Colonic mucosa (tissue), 4 donors: ENCODE measurements at regions of chr3 and their contacts with region 1.

Region 1: GRCh38 chr3:124552239-124552638 is 178.0 kb upstream of the UMPS start:
- DNase-seq: peak; percentile 77
- H3K4me3 ChIP-seq: no peak overlapping the region
- H3K27ac ChIP-seq: no peak overlapping the region
- H3K4me1 ChIP-seq: peaks cover 9% of the 10 kb centered on the region
- H3K27me3 ChIP-seq: no peaks in the 10 kb centered on the region
- CTCF ChIP-seq: no peak

Region 2: DNA sequence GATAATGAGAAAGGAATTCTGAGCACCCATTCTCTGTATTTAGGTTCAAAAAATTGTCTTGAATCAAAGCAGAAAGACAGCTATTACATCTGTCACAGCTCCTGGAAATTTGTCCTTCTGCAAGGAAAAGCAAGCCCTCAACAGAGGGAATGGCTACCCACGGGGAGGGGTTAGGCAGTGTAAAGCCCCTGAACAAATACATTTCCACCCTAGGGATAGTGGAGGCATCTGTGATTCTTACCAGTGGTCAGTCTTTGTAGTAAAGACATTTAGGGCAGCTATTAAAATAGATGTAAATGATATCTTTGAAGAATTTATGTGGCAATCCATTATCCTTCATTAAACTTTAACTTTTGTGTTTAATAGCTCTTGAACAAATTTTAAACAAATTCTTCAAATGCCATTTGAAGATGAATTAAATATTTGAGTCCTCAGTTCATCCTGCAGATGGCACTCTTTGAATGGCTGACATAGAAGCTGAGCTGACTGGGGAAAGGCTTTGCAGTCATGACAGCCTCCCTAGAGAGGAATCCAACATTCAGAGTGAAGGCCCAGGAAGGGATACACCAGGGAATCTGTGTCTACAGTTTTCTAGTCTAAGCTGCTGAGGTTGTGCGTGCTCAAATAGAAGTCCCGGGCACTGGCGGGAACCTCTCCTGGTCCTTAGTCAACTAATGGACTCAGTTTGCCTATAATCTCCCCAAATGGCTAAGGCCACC is 200.7 kb before region 1 on chr3:
- intact Hi-C with region 1: loop called (anchors 2 kb)
- DNase-seq: peak; percentile 34
- H3K4me3 ChIP-seq: no peak overlapping the region
- H3K27ac ChIP-seq: no peak overlapping the region
- H3K4me1 ChIP-seq: no peaks in the 10 kb centered on the region
- H3K27me3 ChIP-seq: no peaks in the 10 kb centered on the region
- CTCF ChIP-seq: peak; percentile 50

Region 3: GRCh38 chr3:124451630-124452317 is 100.5 kb before region 1 on chr3:
- intact Hi-C with region 1: no loop called
- DNase-seq: no peak
- H3K4me3 ChIP-seq: no peak overlapping the region
- H3K27ac ChIP-seq: no peak overlapping the region
- H3K4me1 ChIP-seq: no peaks in the 10 kb centered on the region
- H3K27me3 ChIP-seq: no peaks in the 10 kb centered on the region
- CTCF ChIP-seq: no peak

Region 4: GRCh38 chr3:124492811-124493210 is 59.4 kb before region 1 on chr3:
- intact Hi-C with region 1: loop called (anchors 5 kb)
- DNase-seq: peak; percentile 78
- H3K4me3 ChIP-seq: no peak overlapping the region
- H3K27ac ChIP-seq: no peak overlapping the region
- H3K4me1 ChIP-seq: no peaks in the 10 kb centered on the region
- H3K27me3 ChIP-seq: no peaks in the 10 kb centered on the region
- CTCF ChIP-seq: peak; percentile 47

Region 5: DNA sequence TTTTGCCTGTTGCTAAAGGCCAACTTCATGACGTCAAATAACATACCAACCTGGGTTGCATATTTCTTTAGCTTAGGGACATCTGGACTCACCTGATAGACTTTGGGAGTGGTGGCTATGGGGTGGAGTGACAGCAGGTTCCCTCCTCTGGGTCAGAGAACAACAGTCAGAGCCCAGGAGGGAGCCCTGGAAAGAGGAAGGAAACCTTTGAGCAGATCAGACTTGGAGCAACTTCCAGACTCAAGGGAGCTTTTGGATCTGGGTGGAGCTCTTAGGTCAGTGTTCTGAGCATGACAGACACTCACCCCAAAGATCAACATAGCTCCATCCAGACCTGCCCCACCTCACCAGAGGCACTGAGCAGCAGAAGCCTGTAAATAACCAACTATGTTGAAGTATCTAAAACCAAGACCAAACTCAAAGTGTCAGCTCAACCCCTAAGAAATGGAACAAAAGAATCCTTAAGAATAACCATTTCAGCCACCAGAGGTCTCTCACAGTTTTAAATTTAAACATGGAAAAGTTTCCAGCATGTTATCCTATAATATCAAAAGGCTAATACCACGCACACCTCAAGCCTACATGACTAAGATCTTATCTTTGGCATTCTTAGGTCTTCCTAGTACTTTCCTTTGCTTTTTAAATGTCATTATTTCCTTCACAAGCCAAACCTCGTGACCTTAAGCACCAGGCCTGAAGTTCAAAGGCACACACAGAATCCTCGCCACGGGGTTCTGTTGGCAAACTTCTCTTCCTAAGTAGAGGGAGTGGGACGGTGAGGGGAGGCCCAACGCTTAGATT is 234.4 kb after region 1 on chr3:
- intact Hi-C with region 1: no loop called
- DNase-seq: peak; percentile 41
- H3K4me3 ChIP-seq: no peak overlapping the region
- H3K27ac ChIP-seq: peak overlapping the region; percentile 11
- H3K4me1 ChIP-seq: peaks cover 2% of the 10 kb centered on the region
- H3K27me3 ChIP-seq: no peaks in the 10 kb centered on the region
- CTCF ChIP-seq: no peak